ENCODE measurements at regions of chr1 and their contacts with region 1.

Region 1: DNA sequence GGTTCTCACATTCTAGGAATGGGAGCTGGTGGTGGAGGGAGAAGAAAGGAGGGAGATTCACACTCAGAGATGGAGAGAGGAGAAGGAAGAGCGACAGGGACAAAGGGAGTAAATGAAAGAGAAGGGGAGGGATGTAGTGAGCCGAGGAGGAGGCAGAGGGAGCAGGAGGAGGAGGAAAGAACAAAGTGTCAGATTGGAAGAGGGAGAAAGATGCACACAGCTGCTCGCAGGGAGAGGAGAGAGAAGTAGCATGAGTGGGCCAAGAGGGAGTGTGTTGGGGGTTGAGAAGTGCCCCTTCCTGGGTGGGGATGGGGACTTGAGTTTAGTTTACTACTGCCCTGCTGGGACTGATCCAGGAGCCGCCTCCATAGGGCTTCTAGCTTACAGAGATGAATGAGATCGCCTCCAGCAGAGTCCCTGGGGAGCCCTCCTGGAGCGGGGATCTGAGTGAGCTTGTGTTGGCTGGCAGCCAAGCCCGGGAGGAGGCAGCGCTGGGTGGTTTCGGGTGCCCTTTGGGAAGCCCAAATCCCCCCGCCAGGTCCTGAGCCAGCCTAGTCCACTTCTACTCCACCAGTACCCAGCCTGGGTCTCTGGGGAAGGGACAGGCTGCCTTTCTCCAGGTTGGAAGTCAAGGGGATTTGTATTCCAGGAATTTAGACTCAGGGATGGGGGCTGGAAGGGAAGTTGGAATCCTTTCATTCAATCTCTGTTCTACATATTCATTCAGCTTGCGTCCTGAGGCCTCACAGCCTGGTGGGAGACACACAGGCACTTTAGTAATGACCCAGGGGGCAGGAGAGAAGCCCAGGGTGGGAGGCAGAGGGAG is 20.9 kb downstream of the PTPRU start:
- DNase-seq: no peak
- H3K4me3 ChIP-seq: no peak overlapping the region
- H3K27me3 ChIP-seq: no peaks in the 10 kb centered on the region
- CTCF ChIP-seq: no peak

Region 2: GRCh38 chr1:29237669-29238619 is 19.2 kb before region 1 on chr1:
- CTCF ChIA-PET with region 1: interaction called, 11 read pairs
- POLR2A ChIA-PET with region 1: no interaction called
- DNase-seq: no peak
- H3K4me3 ChIP-seq: peak overlapping the region; percentile 60
- H3K27me3 ChIP-seq: no peaks in the 10 kb centered on the region
- CTCF ChIP-seq: no peak

Region 3: GRCh38 chr1:29245876-29246275 is 11.3 kb before region 1 on chr1:
- CTCF ChIA-PET with region 1: interaction called, 21 read pairs
- POLR2A ChIA-PET with region 1: no interaction called
- DNase-seq: no peak
- H3K4me3 ChIP-seq: no peak overlapping the region
- H3K27me3 ChIP-seq: no peaks in the 10 kb centered on the region
- CTCF ChIP-seq: peak; percentile 43

Region 4: DNA sequence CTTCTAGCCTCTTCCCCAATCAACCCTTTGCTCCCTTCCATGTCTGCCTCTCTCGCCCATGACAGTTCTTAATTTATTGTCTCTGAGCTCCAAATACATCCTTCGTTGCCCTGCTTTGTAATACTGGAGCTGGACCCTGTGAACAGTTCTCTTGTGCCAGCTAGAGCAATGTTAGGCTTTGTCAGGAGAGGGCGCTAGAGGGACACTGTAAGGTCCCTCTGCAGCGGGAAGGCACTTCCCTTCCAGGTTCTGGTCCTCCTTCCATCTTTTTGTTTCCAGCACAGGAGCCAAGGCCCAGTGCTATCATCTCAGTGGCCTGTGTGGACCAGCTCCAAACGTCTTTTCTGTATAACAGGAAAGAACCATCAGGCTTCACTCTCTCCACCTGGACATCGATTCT is 75.0 kb after region 1 on chr1:
- CTCF ChIA-PET with region 1: no interaction called
- POLR2A ChIA-PET with region 1: no interaction called
- DNase-seq: no peak
- H3K4me3 ChIP-seq: no peak overlapping the region
- H3K27me3 ChIP-seq: peaks cover 2% of the 10 kb centered on the region
- CTCF ChIP-seq: peak; percentile 53